HepG2 (cell line): ENCODE measurements at regions of chr1 and their contacts with region 1.

Region 1: DNA sequence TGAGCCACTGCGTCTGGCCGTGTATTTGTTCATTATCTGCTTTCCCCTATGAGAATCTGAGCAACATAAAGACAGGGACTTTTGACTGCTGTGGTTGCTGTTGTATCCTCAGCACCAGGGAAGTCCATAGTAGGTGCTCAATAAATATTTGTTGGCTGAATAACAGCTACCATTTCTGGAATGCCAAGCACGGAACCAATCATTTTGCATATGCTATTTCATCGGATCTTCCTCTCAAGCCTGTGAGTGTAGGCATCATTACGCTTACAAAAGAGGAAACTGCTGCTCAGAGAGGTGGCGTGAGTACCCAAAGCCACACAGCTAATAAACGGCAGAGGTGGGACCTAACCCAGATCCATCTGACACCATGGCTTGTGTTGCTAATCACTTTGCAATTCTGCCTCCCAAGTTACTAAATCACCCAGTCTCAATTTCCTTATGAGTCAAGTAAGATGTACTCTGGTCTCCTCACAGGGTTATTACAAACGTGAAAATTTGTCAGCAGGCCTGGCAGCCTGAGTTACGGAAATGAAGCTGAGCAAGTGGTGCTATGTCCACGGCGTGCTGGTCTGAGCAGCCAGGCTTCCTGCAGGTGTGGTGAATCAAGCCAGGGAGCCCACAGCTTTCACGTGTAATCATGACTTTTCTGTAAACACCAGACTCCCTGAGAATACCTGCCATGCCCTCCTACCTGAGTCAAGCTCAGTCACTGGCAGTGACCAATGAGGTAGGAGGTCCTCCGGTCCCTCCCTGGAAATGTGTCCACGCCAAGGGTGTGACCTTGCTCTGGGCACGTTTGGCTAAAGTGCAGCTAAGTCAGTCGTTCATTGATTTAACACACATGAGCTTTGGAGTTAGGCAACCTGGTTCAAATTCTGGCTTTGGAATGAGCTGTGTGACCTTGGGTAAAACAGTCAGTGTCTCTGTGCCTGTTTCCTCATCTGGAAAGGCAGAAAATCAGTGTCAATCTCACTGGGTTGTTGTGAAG is 4.8 kb upstream of the RHCE start:
- DNase-seq: peak; percentile 19
- ATAC-seq: no peak; the same call in 2 of the 3 replicates
- H3K4me3 ChIP-seq: peak overlapping the region in 1 of 3 experiments; percentile 9; a peak in 1 of 6 replicates
- H3K27ac ChIP-seq: no peak overlapping the region
- H3K4me1 ChIP-seq: peaks cover 29% of the 10 kb centered on the region
- H3K27me3 ChIP-seq: no peaks in the 10 kb centered on the region; a peak in 1 of 5 replicates
- CTCF ChIP-seq: no peak
- EP300 ChIP-seq: no peak
- POLR2A ChIP-seq: no peak
- RAD21 ChIP-seq: no peak

Region 2: DNA sequence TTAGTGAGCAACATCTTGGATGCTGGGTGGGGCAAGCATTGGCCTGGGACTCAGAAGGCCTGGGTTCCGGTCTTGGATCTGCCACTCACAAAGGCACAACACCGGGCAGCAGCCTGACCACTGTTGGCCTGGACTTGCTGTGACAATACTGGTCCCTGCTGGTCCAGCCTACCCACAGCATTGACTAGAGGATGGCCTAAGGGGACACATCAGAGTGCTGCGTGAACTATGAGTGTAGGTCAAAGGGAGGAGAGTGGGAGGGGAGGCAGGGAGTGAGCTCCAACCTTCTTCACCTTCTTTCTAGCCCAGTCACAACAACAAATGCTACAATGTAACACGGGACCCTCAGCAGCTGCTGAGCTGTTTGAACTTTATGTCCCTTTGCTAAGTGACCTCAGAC is 56.2 kb before region 1 on chr1:
- CTCF ChIA-PET with region 1: no interaction called
- POLR2A ChIA-PET with region 1: no interaction called
- in situ Hi-C with region 1: no loop called
- intact Hi-C with region 1: no loop called
- DNase-seq: peak; percentile 4
- ATAC-seq: peak; percentile 91
- H3K4me3 ChIP-seq: no peak overlapping the region
- H3K27ac ChIP-seq: no peak overlapping the region
- H3K4me1 ChIP-seq: no peaks in the 10 kb centered on the region
- H3K27me3 ChIP-seq: no peaks in the 10 kb centered on the region
- CTCF ChIP-seq: peak; percentile 49
- EP300 ChIP-seq: no peak
- POLR2A ChIP-seq: no peak
- RAD21 ChIP-seq: no peak

Region 3: DNA sequence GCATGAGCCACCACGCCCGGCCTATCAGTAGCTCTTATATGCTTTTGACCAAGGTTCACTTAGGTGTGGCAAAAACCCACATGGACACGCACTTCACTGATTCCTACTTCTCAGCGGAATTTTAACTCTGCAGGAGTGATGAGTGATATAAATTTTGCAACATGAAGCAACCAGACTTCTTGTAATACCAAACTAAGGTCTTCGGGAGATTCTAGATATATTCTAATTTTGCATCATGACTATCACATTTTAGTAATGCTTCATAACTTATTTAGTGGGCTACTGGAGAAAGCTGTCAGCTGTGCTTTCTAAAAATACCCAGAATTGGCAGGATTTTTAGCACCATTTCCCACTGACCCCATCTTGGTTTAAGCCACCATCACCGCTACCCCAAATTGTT is 32.6 kb before region 1 on chr1:
- CTCF ChIA-PET with region 1: no interaction called
- POLR2A ChIA-PET with region 1: no interaction called
- in situ Hi-C with region 1: no loop called
- intact Hi-C with region 1: no loop called
- DNase-seq: no peak
- ATAC-seq: no peak
- H3K4me3 ChIP-seq: no peak overlapping the region
- H3K27ac ChIP-seq: no peak overlapping the region
- H3K4me1 ChIP-seq: no peaks in the 10 kb centered on the region
- H3K27me3 ChIP-seq: peaks cover 0 to 1% of the 10 kb centered on the region in 2 experiments; a peak in 1 of 5 replicates
- CTCF ChIP-seq: no peak
- EP300 ChIP-seq: no peak
- POLR2A ChIP-seq: no peak
- RAD21 ChIP-seq: no peak

Region 4: DNA sequence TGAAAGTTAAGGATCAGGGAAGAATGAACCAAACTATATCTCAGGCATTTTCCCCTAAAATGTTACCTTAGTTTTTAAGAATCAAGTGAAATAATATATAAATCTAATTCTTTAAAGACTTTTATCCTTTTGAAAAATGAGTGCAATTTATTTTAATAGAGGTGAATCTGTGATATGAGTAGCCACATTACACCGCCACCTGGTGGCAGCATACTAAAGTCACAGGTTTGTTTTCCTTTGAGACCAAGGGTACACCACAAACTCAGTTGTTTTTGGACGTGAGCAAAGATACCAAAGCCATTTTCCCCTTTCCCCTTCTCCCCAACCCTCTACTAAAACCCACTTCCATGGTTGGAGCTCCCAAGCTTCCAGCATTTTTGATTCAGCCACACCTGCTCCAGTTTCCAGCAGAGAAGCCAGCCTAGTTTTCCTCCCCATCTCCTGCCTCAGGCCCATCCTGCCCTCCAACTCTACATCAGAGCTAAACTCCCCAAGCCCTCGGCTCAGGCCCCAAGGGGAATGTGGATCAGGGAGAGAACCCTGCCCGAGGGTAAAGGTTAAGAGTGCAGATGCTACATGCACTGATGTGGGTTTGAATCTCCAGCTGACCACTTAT is 95.2 kb after region 1 on chr1:
- CTCF ChIA-PET with region 1: no interaction called
- POLR2A ChIA-PET with region 1: no interaction called
- in situ Hi-C with region 1: loop called (anchors 25 kb)
- intact Hi-C with region 1: no loop called
- DNase-seq: peak; percentile 33
- ATAC-seq: no peak
- H3K4me3 ChIP-seq: no peak overlapping the region
- H3K27ac ChIP-seq: no peak overlapping the region
- H3K4me1 ChIP-seq: peaks cover 15% of the 10 kb centered on the region
- H3K27me3 ChIP-seq: peaks cover 0 to 1% of the 10 kb centered on the region in 2 experiments; a peak in 2 of 5 replicates
- CTCF ChIP-seq: peak; percentile 73
- EP300 ChIP-seq: no peak
- POLR2A ChIP-seq: no peak
- RAD21 ChIP-seq: no peak